ENCODE measurements at regions of chrX and their contacts with region 1.

Region 1: DNA sequence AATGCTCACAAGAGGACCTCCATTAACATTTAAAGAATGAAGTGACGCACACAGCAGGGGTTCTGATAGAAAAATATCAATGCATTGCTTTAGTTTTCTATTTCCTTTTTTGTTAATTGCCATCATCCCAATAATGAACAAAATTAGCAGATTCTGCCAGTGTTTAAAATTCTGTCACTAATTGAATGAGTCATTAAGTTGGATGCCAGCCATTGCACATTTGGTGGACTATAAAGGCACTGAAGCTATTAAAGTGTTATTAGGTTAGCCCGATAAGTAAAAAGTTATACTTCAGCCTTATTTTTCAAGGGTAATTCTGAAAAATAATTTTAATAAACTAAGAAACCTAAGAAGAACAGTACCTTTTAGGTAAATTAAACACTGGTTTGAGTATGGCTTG is 53.1 kb downstream of the MAP3K15 start:
- DNase-seq: no peak
- H3K4me3 ChIP-seq: no peak overlapping the region
- H3K27ac ChIP-seq: no peak overlapping the region
- H3K4me1 ChIP-seq: no peaks in the 10 kb centered on the region
- H3K27me3 ChIP-seq: no peaks in the 10 kb centered on the region
- CTCF ChIP-seq: no peak

Region 2: DNA sequence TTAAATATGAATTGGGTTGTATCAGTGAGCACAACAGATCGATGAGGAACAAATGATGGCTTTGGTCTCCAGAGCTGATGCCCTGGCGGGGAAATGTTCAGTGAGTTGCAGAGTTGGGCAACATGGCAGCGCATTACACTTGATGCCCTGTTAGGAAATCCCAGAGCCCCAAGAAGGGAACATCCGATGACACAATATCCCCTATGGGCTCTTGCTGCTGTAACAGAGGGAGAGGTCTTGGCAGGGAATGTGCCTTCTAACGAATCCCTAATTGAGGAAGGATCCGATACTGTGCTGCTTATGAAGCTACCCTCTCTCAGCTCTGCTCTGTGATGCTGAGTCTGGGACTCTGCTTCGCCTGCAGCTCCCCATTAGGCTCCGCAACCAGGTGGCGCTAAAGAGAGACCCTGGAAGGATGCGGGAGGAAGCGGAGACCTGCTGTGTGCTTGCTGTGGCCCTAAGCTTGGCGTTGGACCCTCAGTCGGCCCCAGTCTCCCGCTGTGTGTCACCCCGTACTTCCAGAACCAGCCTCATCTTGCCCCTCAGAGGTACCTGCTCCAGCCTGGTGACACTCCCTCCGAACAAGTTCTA is 79.6 kb before region 1 on chrX:
- intact Hi-C with region 1: loop called (anchors 10 kb)
- DNase-seq: no peak
- H3K4me3 ChIP-seq: no peak overlapping the region
- H3K27ac ChIP-seq: no peak overlapping the region
- H3K4me1 ChIP-seq: no peaks in the 10 kb centered on the region
- H3K27me3 ChIP-seq: no peaks in the 10 kb centered on the region
- CTCF ChIP-seq: peak in 1 of 3 experiments; percentile 35

Region 3: GRCh38 chrX:20112021-20112797 is 650.0 kb after region 1 on chrX:
- intact Hi-C with region 1: no loop called
- DNase-seq: no peak
- H3K4me3 ChIP-seq: no peak overlapping the region
- H3K27ac ChIP-seq: no peak overlapping the region
- H3K4me1 ChIP-seq: no peaks in the 10 kb centered on the region
- H3K27me3 ChIP-seq: peaks cover 5% of the 10 kb centered on the region
- CTCF ChIP-seq: no peak